ENCODE measurements at regions of chr9 and their contacts with region 1.

Region 1: DNA sequence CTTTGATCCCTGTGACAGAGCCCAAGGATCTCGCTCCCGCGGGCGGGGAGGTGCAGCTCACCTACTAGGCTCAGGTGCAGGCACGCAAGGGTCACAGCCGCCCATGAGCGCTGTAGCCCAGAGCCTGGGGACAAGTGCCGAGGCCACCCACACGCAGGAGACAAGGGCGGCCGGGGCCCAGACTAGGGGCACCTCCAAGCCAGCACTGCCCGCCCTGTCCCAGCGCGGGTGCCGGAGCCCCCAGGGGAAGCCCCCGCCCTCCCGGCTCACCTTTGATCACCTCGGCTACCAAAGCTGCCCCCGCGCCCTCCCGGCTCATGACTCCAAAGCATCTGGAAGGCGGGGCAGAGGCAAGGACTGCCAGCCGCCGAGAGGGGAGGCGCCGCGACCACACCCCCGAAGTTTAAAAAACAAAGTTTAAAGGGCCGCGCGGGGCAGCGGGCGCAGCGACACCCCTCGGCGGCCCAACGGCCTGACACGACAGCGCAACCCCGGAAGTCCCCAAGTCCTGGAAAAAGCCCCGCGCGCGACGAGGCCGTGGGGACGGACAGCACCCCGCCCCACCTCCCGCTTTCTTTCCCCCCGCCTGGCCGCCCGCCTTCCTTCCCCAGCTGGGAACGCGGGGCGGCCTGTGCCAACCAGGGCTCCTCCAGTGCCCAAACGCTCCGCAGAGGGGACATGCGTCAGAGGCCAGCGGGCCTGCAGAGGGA is 53.0 kb downstream of the CDC14B start:
- DNase-seq: peak; percentile 89
- ATAC-seq: peak; percentile 91
- H3K4me3 ChIP-seq: peak overlapping the region; percentile 36 to 88 (median 74)
- H3K4me3 Mint-ChIP-seq: peak overlapping the region; percentile 92
- H3K27ac ChIP-seq: peak overlapping the region; percentile 84 to 94
- H3K27ac Mint-ChIP-seq: peak overlapping the region; percentile 92
- H3K4me1 ChIP-seq: peaks cover 11 to 15% of the 10 kb centered on the region in 2 donors
- H3K4me1 Mint-ChIP-seq: peaks cover 18% of the 10 kb centered on the region
- H3K27me3 ChIP-seq: no peaks in the 10 kb centered on the region
- H3K27me3 Mint-ChIP-seq: peaks cover 7% of the 10 kb centered on the region
- CTCF ChIP-seq: peak; percentile 82

Region 2: DNA sequence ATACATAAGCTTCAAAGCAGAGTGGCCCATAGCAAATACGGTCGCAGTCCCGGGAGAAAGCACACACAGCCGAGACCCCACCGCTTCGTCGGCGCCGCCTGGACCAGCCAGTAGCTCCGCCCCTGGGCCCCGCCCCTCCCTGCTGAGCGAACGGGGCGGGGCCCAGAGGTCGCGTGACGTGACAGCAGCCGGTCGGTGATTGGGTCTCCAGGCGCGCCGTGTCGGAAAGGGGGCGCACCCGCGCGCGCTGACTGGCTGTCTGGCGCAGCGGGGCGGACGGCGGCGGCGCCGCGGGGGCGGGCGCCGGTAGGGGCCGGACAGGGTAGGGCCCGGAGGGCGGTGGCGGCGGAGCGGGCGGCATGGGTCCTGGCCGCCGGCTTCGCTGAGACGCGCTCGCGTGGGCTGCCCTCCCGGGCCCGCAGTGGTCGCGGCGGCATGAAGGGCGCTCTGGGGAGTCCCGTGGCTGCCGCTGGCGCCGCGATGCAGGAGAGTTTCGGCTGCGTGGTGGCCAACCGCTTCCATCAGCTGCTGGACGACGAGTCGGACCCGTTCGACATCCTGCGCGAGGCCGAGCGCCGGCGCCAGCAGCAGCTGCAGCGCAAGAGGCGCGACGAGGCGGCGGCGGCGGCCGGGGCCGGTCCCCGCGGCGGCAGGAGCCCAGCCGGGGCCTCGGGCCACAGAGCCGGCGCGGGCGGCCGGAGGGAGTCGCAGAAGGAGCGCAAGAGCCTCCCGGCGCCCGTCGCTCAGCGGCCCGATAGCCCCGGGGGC is 116.6 kb before region 1 on chr9 and contains the start of gene HABP4:
- CTCF ChIA-PET with region 1: interaction called, 19 read pairs
- POLR2A ChIA-PET with region 1: interaction called, 5 read pairs
- intact Hi-C with region 1: loop called (anchors 1 kb)
- DNase-seq: peak; percentile 96
- ATAC-seq: peak; percentile 95
- H3K4me3 ChIP-seq: peak within 1 kb of the TSS; percentile 59 to 74 (median 65)
- H3K4me3 Mint-ChIP-seq: peak within 1 kb of the TSS; percentile 94
- H3K27ac ChIP-seq: no peak within 1 kb of the TSS
- H3K27ac Mint-ChIP-seq: peak within 1 kb of the TSS; percentile 83
- H3K4me1 ChIP-seq: peaks cover 12 to 13% of the 10 kb centered on the region in 2 donors
- H3K4me1 Mint-ChIP-seq: peaks cover 14% of the 10 kb centered on the region
- H3K27me3 ChIP-seq: peaks cover 0 to 8% (median 0%) of the 10 kb centered on the region in 4 experiments
- H3K27me3 Mint-ChIP-seq: peaks cover 7% of the 10 kb centered on the region
- CTCF ChIP-seq: no peak
- total RNA-seq, gene HABP4: 14.1 and 15.0 TPM in 2 replicates

Region 3: DNA sequence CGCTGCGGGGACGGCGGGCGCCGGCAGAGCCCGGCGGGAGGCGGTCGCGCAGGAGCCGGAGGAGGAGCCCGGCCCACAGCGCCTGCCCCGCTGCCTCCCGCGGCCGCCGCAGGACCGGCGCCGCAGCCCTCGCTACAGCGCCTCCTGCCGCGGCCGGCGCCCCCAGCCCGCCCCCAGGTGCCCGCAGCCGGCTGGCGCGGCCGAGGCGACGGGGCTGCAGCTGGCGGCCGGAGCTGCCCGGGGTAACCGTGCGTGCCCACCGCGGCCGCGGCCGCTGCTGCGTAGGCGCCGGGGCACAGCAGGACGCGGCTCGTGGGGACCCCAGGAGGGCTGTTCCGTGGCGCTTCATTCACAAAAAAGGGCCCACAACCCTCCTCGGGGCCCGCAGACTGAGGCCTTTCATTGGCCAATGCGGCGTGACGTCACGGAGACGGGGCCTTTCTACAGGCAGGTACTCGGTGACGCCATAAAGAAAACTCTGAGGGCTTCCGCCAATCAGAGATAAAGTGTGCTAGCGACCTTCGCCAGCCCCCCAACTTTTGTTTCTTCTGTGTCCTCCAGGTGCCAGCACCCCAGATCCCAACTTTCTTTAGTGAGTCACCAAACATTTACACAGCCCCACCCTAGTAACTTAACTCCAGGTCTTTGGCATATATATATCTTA is 53.0 kb after region 1 on chr9 and contains the start of gene CDC14B:
- CTCF ChIA-PET with region 1: no interaction called
- POLR2A ChIA-PET with region 1: no interaction called
- intact Hi-C with region 1: no loop called
- DNase-seq: peak; percentile 78
- ATAC-seq: peak; percentile 82
- H3K4me3 ChIP-seq: peak within 1 kb of the TSS; percentile 5 to 58 (median 43)
- H3K4me3 Mint-ChIP-seq: peak within 1 kb of the TSS; percentile 63
- H3K27ac ChIP-seq: no peak within 1 kb of the TSS
- H3K27ac Mint-ChIP-seq: no peak within 1 kb of the TSS
- H3K4me1 ChIP-seq: peaks cover 11 to 14% of the 10 kb centered on the region in 2 donors
- H3K4me1 Mint-ChIP-seq: peaks cover 7% of the 10 kb centered on the region
- H3K27me3 ChIP-seq: peaks cover 0 to 41% (median 25%) of the 10 kb centered on the region in 4 experiments
- H3K27me3 Mint-ChIP-seq: peaks cover 52% of the 10 kb centered on the region
- CTCF ChIP-seq: no peak
- total RNA-seq, gene CDC14B: 8.5 TPM in 2 replicates

Region 4: DNA sequence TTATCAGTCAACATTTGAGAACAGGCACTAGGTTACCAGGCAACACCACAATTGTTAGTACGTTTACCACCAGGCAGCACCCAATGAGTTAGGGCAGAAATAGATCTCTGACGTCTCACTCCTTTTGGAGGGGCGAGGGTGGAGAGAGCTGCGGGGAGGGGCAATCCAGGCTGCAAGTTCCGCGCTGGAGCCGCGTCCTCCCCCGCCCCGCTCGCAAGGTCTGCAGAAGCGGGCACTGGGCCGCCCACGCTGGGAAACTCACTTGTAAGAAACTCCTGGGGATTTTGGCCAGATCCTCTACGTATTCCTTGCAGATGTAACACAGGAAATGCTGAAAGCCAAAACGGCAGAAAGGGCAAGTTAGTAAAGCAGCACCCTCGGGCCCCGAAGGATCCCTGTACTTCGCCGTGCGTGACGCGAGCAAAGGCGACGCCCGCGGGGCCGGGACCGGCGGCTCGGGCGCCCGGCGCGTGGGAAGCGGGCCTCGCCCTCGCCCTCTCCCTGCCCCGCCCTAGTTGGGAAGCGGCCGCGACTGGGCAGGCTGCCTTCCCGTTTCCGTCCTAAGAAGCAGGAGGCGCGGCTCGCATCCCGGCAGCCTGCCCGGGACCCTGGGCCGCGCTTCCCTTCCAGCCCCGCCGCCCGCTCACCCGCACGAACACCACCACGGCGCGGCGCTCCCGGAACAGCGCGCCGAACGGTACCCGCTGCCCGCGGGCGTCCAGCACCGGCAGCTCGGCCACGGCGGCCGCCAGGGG is 88.0 kb after region 1 on chr9:
- CTCF ChIA-PET with region 1: interaction called, 3 read pairs
- POLR2A ChIA-PET with region 1: interaction called, 4 read pairs
- intact Hi-C with region 1: loop called (anchors 1 kb)
- DNase-seq: peak; percentile 89
- ATAC-seq: peak; percentile 62
- H3K4me3 ChIP-seq: peak overlapping the region in 4 of 5 experiments; percentile 44 to 84 (median 60)
- H3K4me3 Mint-ChIP-seq: peak overlapping the region; percentile 96
- H3K27ac ChIP-seq: peak overlapping the region; percentile 69 to 85
- H3K27ac Mint-ChIP-seq: peak overlapping the region; percentile 98
- H3K4me1 ChIP-seq: peaks cover 8 to 16% of the 10 kb centered on the region in 2 donors
- H3K4me1 Mint-ChIP-seq: peaks cover 19% of the 10 kb centered on the region
- H3K27me3 ChIP-seq: no peaks in the 10 kb centered on the region
- H3K27me3 Mint-ChIP-seq: no peaks in the 10 kb centered on the region
- CTCF ChIP-seq: no peak

Region 5: GRCh38 chr9:97632985-97633858 is 1066.6 kb after region 1 on chr9 and contains the starts of genes NCBP1 and TSTD2:
- CTCF ChIA-PET with region 1: no interaction called
- POLR2A ChIA-PET with region 1: no interaction called
- intact Hi-C with region 1: loop called (anchors 10 kb)
- DNase-seq: peak; percentile 99
- ATAC-seq: peak; percentile 91
- H3K4me3 ChIP-seq: peak within 1 kb of the TSS; percentile 94 to 99 (median 95)
- H3K4me3 Mint-ChIP-seq: peak within 1 kb of the TSS; percentile 97
- H3K27ac ChIP-seq: peak within 1 kb of the TSS; percentile 92 to 93
- H3K27ac Mint-ChIP-seq: peak within 1 kb of the TSS; percentile 98
- H3K4me1 ChIP-seq: peaks cover 26 to 35% of the 10 kb centered on the region in 2 donors
- H3K4me1 Mint-ChIP-seq: peaks cover 58% of the 10 kb centered on the region
- H3K27me3 ChIP-seq: no peaks in the 10 kb centered on the region
- H3K27me3 Mint-ChIP-seq: no peaks in the 10 kb centered on the region
- CTCF ChIP-seq: no peak
- total RNA-seq, gene NCBP1: 38.0 and 40.7 TPM in 2 replicates
- total RNA-seq, gene TSTD2: 29.2 and 31.1 TPM in 2 replicates

Region 6: GRCh38 chr9:97803167-97804058 is 1236.8 kb after region 1 on chr9:
- CTCF ChIA-PET with region 1: no interaction called
- POLR2A ChIA-PET with region 1: no interaction called
- intact Hi-C with region 1: loop called (anchors 5 kb)
- DNase-seq: peak; percentile 84
- ATAC-seq: peak; percentile 94
- H3K4me3 ChIP-seq: peak overlapping the region in 4 of 5 experiments; percentile 36 to 64 (median 56)
- H3K4me3 Mint-ChIP-seq: peak overlapping the region; percentile 87
- H3K27ac ChIP-seq: no peak overlapping the region
- H3K27ac Mint-ChIP-seq: peak overlapping the region; percentile 20
- H3K4me1 ChIP-seq: peaks cover 7 to 9% of the 10 kb centered on the region in 2 donors
- H3K4me1 Mint-ChIP-seq: peaks cover 10% of the 10 kb centered on the region
- H3K27me3 ChIP-seq: peaks cover 0 to 20% (median 7%) of the 10 kb centered on the region in 4 experiments
- H3K27me3 Mint-ChIP-seq: peaks cover 30% of the 10 kb centered on the region
- CTCF ChIP-seq: peak; percentile 16

Measured in B cell (primary cell).